Natural killer cell (primary cell): ENCODE measurements at regions of chr16 and their contacts with region 1.

Region 1: DNA sequence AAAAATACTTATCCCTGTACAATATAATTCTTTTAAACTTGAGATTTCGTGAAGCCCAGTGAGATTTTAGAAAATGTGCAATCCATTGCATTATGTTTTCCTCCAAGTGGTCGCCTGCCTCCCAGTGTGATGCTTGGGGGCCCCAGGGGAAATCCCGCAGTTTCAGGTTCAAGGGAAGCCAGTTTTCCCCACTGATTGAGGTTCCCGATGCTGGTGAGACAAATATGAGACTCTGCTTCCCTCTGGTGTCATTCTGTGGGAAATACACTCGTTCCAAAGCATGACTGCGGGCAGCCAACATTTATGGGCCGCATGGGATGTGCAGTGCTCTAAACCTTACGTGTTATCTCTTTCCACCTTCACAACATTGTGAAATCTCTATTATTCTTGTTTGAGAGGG is 200.8 kb downstream of the PRKCB start:
- DNase-seq: peak in 1 of 2 donors; percentile 76
- ATAC-seq: peak in 2 of 3 donors; percentile 57 to 63
- H3K4me3 ChIP-seq: no peak overlapping the region
- H3K4me3 Mint-ChIP-seq: peak overlapping the region; percentile 83
- H3K27ac ChIP-seq: no peak overlapping the region
- H3K27ac Mint-ChIP-seq: peak overlapping the region; percentile 62 to 75
- H3K4me1 ChIP-seq: peaks cover 52% of the 10 kb centered on the region
- H3K4me1 Mint-ChIP-seq: peaks cover 41 to 56% of the 10 kb centered on the region in 2 donors
- H3K27me3 ChIP-seq: no peaks in the 10 kb centered on the region
- H3K27me3 Mint-ChIP-seq: no peaks in the 10 kb centered on the region
- CTCF ChIP-seq: peak; percentile 70

Region 2: GRCh38 chr16:23734176-23734893 is 302.3 kb before region 1 on chr16:
- intact Hi-C with region 1: loop called (anchors 2 kb)
- DNase-seq: no peak
- ATAC-seq: no peak
- H3K4me3 ChIP-seq: no peak overlapping the region
- H3K4me3 Mint-ChIP-seq: no peak overlapping the region
- H3K27ac ChIP-seq: no peak overlapping the region
- H3K27ac Mint-ChIP-seq: no peak overlapping the region
- H3K4me1 ChIP-seq: no peaks in the 10 kb centered on the region
- H3K4me1 Mint-ChIP-seq: peaks cover 0 to 5% of the 10 kb centered on the region in 2 donors
- H3K27me3 ChIP-seq: no peaks in the 10 kb centered on the region
- H3K27me3 Mint-ChIP-seq: peaks cover 7 to 8% of the 10 kb centered on the region in 2 donors
- CTCF ChIP-seq: no peak